PC-3 (cell line): ENCODE measurements at regions of chr9 and their contacts with region 1.

Region 1: DNA sequence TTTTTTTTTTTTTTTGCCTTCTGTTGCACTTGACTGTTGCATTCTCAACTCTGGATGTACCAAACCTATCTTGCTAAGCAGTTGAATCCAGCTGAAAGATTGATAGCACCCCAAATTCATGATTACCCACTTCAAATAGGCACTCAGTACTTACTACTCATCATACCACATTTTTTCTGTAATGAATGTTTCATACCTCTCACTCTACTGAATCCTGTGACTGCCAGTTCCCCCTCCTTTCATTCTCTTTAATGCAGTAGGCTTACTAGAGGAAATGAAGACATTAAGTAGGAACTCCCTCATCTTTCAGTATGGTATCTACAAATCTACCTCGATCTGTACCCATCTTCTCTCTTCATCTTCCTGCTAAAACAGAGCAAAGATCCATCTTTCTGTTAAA is 6.8 kb downstream of the INVS start:
- DNase-seq: no peak
- ATAC-seq: no peak
- H3K4me3 ChIP-seq: no peak overlapping the region
- H3K27ac ChIP-seq: no peak overlapping the region
- H3K4me1 ChIP-seq: peaks cover 6% of the 10 kb centered on the region
- H3K27me3 ChIP-seq: no peaks in the 10 kb centered on the region
- CTCF ChIP-seq: no peak

Region 2: GRCh38 chr9:99954819-99955218 is 151.0 kb before region 1 on chr9:
- CTCF ChIA-PET with region 1: no interaction called
- POLR2A ChIA-PET with region 1: no interaction called
- intact Hi-C with region 1: no loop called
- DNase-seq: no peak
- ATAC-seq: no peak
- H3K4me3 ChIP-seq: no peak overlapping the region
- H3K27ac ChIP-seq: no peak overlapping the region
- H3K4me1 ChIP-seq: no peaks in the 10 kb centered on the region
- H3K27me3 ChIP-seq: no peaks in the 10 kb centered on the region
- CTCF ChIP-seq: no peak

Region 3: DNA sequence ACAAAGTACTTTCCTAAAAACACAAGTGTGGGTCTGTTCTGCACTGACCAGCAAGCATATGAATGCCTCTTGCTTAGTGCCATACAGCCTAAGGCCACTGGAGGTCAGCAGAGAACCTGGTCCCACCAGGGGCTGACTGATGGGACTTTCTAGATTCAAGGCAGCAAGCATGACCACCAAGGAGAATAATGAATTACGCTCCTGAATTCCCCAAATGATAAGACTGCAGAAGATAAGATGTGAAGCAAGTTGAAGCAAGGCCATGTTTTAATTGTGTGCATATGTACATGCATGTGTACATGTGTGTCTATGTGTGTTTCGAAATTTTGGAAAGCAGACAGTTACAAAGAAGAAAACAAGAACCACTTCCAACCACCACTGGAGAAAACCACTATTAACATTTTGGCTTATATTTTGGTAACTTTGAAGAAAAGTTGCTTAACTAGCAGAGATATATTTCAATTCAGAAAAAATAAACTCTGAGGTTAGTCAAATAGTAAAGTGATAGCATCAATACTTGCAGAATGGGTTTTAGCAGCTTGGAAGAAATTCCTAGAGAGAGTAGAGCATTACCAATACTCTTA is 77.6 kb before region 1 on chr9:
- CTCF ChIA-PET with region 1: no interaction called
- POLR2A ChIA-PET with region 1: no interaction called
- intact Hi-C with region 1: no loop called
- DNase-seq: peak; percentile 74
- ATAC-seq: peak; percentile 85
- H3K4me3 ChIP-seq: no peak overlapping the region
- H3K27ac ChIP-seq: no peak overlapping the region
- H3K4me1 ChIP-seq: no peaks in the 10 kb centered on the region
- H3K27me3 ChIP-seq: no peaks in the 10 kb centered on the region
- CTCF ChIP-seq: peak; percentile 84

Region 4: GRCh38 chr9:100084734-100085133 is 21.1 kb before region 1 on chr9:
- CTCF ChIA-PET with region 1: no interaction called
- POLR2A ChIA-PET with region 1: no interaction called
- intact Hi-C with region 1: no loop called
- DNase-seq: no peak
- ATAC-seq: no peak
- H3K4me3 ChIP-seq: no peak overlapping the region
- H3K27ac ChIP-seq: no peak overlapping the region
- H3K4me1 ChIP-seq: peaks cover 25% of the 10 kb centered on the region
- H3K27me3 ChIP-seq: no peaks in the 10 kb centered on the region
- CTCF ChIP-seq: no peak

Region 5: DNA sequence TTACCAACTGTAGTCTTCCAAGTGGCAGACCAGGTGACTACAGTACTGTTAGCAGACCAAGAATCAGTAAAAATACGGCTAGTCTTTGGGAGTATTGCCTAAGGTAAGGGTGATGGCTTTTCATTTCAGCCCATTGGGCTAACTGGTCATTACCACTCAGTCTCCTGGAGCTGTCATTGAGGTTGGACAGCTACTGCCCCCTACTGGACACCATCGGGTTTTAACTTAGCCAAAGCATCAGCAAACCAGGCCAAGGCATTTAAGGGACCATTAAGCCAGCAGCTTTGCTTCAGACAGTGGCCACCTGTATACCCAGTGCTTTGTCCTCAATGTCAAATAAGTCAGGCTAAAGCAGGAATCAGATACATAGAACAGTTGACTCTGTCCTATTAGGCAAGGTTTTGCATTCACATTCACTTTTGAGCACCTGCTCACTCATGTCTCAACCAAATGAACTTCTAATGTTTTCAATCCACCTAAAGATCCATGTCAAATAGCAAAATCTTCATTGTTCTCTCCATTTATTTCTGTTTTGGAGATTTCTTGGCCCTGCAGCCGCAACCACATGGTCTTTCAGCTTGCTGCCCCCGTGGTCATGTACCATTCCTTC is 110.4 kb after region 1 on chr9:
- CTCF ChIA-PET with region 1: interaction called, 13 read pairs
- POLR2A ChIA-PET with region 1: no interaction called
- intact Hi-C with region 1: no loop called
- DNase-seq: peak; percentile 67
- ATAC-seq: peak; percentile 67
- H3K4me3 ChIP-seq: no peak overlapping the region
- H3K27ac ChIP-seq: no peak overlapping the region
- H3K4me1 ChIP-seq: no peaks in the 10 kb centered on the region
- H3K27me3 ChIP-seq: no peaks in the 10 kb centered on the region
- CTCF ChIP-seq: peak; percentile 78